ENCODE measurements at regions of chr4 and their contacts with region 1.

Region 1: GRCh38 chr4:182938205-182938645 is 21.0 kb upstream of the DCTD start:
- H3K4me3 ChIP-seq: no peak overlapping the region
- H3K27ac ChIP-seq: no peak overlapping the region
- H3K4me1 ChIP-seq: no peaks in the 10 kb centered on the region
- CTCF ChIP-seq: peak; percentile 65

Region 2: DNA sequence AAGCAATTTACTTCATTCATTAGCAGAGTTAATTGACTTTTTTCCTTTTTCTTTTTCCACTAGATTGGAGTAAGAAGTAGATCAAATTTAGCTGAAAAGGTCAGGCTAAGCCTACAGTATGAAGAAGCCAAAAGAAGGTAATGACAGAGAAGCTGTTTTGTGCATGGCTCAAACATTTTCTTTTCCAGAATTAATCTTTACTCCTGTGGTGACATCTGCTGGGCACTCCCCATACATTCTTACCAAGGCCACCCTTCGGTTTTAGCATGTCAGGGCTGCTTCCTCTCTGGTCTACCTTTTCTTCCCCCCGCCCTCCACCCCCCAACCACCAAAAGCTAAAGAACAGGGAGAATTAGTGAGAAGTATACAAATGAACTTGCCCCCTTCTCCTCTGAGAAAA is 311.6 kb after region 1 on chr4:
- CTCF ChIA-PET with region 1: interaction called, 29 read pairs
- POLR2A ChIA-PET with region 1: no interaction called
- H3K4me3 ChIP-seq: no peak overlapping the region
- H3K27ac ChIP-seq: no peak overlapping the region
- H3K4me1 ChIP-seq: peaks cover 6% of the 10 kb centered on the region
- CTCF ChIP-seq: peak; percentile 30; the same call in 1 of the 2 replicates

Region 3: GRCh38 chr4:183256756-183257385 is 318.6 kb after region 1 on chr4:
- CTCF ChIA-PET with region 1: interaction called, 34 read pairs
- POLR2A ChIA-PET with region 1: no interaction called
- H3K4me3 ChIP-seq: no peak overlapping the region
- H3K27ac ChIP-seq: no peak overlapping the region
- H3K4me1 ChIP-seq: no peaks in the 10 kb centered on the region
- CTCF ChIP-seq: peak; percentile 34; the same call in 1 of the 2 replicates